K562 (cell line): ENCODE measurements at regions of chr12 and their contacts with region 1.

Region 1: DNA sequence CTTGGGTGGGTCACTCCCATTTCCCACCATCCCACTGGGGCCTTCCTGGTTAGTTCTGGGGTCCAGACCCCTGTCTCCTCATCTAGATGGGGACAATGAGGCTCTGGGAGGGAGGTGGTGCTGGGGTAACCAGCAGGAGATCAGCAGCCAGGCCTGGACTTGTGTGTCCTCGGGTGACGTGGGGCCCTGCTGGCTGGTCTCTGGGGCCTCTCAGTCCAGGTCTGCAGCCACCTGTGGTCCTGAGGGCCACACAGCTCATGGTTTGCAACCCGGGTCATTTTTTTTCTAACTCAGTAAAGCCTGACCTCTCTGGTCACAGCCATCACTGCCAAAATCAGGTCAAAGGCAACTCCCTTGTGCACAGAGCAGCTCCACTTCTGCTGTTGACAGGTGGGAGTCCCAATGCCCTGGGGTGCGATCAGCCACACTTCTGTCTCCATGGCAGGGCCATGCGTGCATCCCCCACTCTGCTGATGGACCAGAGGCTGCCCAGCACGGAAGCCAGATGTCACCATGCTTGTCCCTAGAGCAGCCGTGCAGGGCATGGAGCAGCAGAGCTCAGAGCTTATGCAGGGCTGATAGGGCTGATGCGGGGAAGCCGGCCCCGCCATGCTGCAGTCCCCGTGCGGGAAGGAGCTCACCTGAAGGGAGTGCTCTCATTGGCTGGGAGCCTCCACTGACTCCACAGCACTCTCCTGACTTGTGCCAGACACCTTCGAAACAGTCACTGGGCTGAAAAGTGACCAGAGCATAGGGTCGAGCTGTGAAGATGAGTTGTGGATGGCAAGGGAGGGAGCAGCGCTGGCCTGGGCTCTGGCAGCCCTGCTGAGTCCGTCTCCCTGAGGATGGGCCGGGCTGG is 250.9 kb downstream of the ADGRD1 start:
- DNase-seq: no peak
- ATAC-seq: no peak; the same call in 2 of the 3 replicates
- H3K4me3 ChIP-seq: no peak overlapping the region
- H3K27ac ChIP-seq: no peak overlapping the region
- H3K4me1 ChIP-seq: peaks cover 0 to 7% of the 10 kb centered on the region in 2 experiments; a peak in 1 of 5 replicates
- H3K27me3 ChIP-seq: peaks cover 19 to 35% of the 10 kb centered on the region in 2 experiments; a peak in 4 of 5 replicates
- CTCF ChIP-seq: no peak
- EP300 ChIP-seq: no peak
- POLR2A ChIP-seq: no peak
- RAD21 ChIP-seq: no peak

Region 2: DNA sequence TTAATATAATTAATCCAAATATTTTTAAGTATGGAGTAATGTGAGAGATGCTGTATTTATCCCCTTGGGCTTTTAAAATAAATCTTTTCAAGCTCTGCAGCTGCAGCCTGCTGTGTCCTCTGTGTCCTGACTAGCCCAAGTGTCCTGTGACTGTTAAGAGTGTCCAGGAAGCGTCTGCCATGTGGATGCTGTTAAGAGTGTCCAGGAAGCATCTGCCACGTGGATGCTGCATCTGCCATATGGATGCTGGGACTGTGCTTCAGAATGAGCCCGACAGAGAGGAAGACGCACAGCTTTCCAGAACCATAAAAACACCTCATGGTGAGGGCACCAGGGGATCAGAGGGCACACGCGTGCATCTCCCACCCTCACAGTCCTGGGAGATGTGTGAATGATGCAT is 56.3 kb after region 1 on chr12:
- CTCF ChIA-PET with region 1: no interaction called
- POLR2A ChIA-PET with region 1: no interaction called
- in situ Hi-C with region 1: no loop called
- intact Hi-C with region 1: no loop called
- DNase-seq: no peak
- ATAC-seq: no peak
- H3K4me3 ChIP-seq: no peak overlapping the region
- H3K27ac ChIP-seq: no peak overlapping the region
- H3K4me1 ChIP-seq: peaks cover 3 to 14% of the 10 kb centered on the region in 2 experiments; a peak in 3 of 5 replicates
- H3K27me3 ChIP-seq: peaks cover 0 to 11% of the 10 kb centered on the region in 2 experiments; a peak in 1 of 5 replicates
- CTCF ChIP-seq: no peak
- EP300 ChIP-seq: no peak
- POLR2A ChIP-seq: no peak
- RAD21 ChIP-seq: no peak

Region 3: GRCh38 chr12:131473741-131474709 is 269.4 kb after region 1 on chr12:
- CTCF ChIA-PET with region 1: no interaction called
- POLR2A ChIA-PET with region 1: no interaction called
- in situ Hi-C with region 1: loop called (anchors 5 kb)
- intact Hi-C with region 1: no loop called
- DNase-seq: peak in 2 of 4 experiments; percentile 19 to 20
- ATAC-seq: peak; percentile 76
- H3K4me3 ChIP-seq: no peak overlapping the region
- H3K27ac ChIP-seq: no peak overlapping the region
- H3K4me1 ChIP-seq: peaks cover 0 to 15% of the 10 kb centered on the region in 2 experiments; a peak in 3 of 5 replicates
- H3K27me3 ChIP-seq: peaks cover 11 to 34% of the 10 kb centered on the region in 2 experiments; a peak in 4 of 5 replicates
- CTCF ChIP-seq: peak in 1 of 3 experiments; percentile 6; a peak in 2 of 6 replicates
- EP300 ChIP-seq: no peak
- POLR2A ChIP-seq: no peak
- RAD21 ChIP-seq: peak in 1 of 2 experiments; percentile 35; a peak in 2 of 4 replicates